Activated CD8-positive, alpha-beta T cell treated with anti-CD3 and anti-CD28 coated beads for 36 hours (primary cell): ENCODE measurements at regions of chr6 and their contacts with region 1.

Region 1: DNA sequence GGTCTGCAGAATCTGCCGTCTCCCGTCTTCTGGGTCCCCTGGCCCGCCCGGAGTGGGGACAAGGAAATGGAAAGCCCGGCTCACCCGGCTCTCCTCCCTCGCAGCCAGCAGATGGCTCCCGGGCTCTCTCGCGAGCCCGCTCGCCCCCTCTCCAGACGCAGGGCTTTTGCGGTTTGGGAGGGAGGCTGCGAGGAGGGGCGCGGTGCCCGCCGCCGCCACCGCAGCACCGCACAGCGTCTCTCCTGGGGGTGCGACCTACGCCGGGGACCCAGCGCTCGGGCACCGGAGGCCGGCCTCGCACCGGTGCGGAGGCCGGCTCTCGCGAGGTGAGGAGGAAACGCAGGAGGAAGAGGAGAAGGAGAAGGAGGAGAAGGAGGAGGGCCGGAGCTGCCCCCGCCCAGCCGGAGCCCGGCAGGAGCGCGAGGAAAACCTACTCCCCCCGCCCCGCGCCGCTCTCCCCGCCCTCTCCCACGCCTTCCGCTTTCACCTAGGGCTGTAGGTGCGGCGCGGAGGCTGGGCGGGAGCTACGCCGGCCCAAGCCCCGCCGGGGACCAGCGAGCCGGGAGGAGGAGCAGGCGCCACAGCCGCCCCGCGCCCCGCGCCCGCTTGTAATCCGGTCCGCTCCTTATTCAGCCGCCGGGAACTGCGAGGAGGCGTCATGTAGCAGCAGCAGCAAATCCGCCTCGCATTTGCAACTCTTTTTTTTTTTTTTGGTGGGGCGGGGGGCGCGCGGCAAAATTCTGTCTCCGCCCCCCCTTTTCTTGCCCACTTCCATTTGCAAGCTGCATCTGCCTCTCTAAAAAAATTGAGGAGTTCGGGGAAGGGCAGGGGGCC is at the start of gene CARMIL1:
- DNase-seq: peak; percentile 81
- ATAC-seq: peak; percentile 79
- H3K4me3 Mint-ChIP-seq: peak within 1 kb of the TSS; percentile 81
- H3K27ac Mint-ChIP-seq: peak within 1 kb of the TSS; percentile 66
- H3K4me1 Mint-ChIP-seq: peaks cover 36% of the 10 kb centered on the region
- H3K27me3 Mint-ChIP-seq: no peaks in the 10 kb centered on the region
- CTCF ChIP-seq: peak; percentile 75
- total RNA-seq, gene CARMIL1: 3.6 to 4.1 TPM

Region 2: DNA sequence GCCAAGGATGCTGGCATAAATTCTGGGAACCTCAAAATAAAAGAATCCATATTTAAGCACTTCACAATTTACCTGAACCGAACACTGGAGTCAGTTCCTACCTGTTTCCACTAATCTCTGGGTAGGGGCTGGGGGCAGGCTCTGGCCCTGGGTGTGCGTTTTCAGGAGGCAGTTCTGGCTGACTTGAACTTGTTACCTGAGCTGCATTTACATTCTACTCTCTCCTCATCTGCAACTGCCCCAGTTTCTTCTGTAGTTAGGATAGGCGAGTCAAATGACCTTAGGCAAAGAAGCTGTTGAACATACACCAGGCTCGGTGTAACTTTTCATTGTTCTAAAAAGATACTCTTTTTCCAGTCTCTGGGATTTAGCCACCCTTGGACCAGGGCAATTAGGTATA is 13.3 kb after region 1 on chr6:
- CTCF ChIA-PET with region 1: interaction called, 11 read pairs
- POLR2A ChIA-PET with region 1: interaction called, 4 read pairs
- intact Hi-C with region 1: no loop called
- DNase-seq: no peak
- ATAC-seq: no peak
- H3K4me3 Mint-ChIP-seq: no peak overlapping the region
- H3K27ac Mint-ChIP-seq: no peak overlapping the region
- H3K4me1 Mint-ChIP-seq: peaks cover 24% of the 10 kb centered on the region
- H3K27me3 Mint-ChIP-seq: no peaks in the 10 kb centered on the region
- CTCF ChIP-seq: no peak

Region 3: GRCh38 chr6:25369433-25370181 is 90.5 kb after region 1 on chr6:
- CTCF ChIA-PET with region 1: interaction called, 10 read pairs
- POLR2A ChIA-PET with region 1: interaction called, 8 read pairs
- intact Hi-C with region 1: loop called (anchors 5 kb)
- DNase-seq: peak; percentile 51
- ATAC-seq: no peak
- H3K4me3 Mint-ChIP-seq: peak overlapping the region; percentile 58
- H3K27ac Mint-ChIP-seq: peak overlapping the region; percentile 92
- H3K4me1 Mint-ChIP-seq: peaks cover 79% of the 10 kb centered on the region
- H3K27me3 Mint-ChIP-seq: no peaks in the 10 kb centered on the region
- CTCF ChIP-seq: no peak

Region 4: GRCh38 chr6:25519856-25520255 is 240.7 kb after region 1 on chr6:
- CTCF ChIA-PET with region 1: interaction called, 11 read pairs
- POLR2A ChIA-PET with region 1: no interaction called
- intact Hi-C with region 1: no loop called
- DNase-seq: no peak
- ATAC-seq: no peak
- H3K4me3 Mint-ChIP-seq: no peak overlapping the region
- H3K27ac Mint-ChIP-seq: no peak overlapping the region
- H3K4me1 Mint-ChIP-seq: no peaks in the 10 kb centered on the region
- H3K27me3 Mint-ChIP-seq: no peaks in the 10 kb centered on the region
- CTCF ChIP-seq: no peak